Mammary epithelial cell (primary cell): ENCODE measurements at regions of chr2 and their contacts with region 1.

Region 1: GRCh38 chr2:237674731-237675276 is 47.4 kb downstream of the LRRFIP1 start:
- DNase-seq: peak; percentile 87
- H3K4me3 ChIP-seq: peak overlapping the region in 2 of 3 experiments; percentile 13 to 22
- H3K27ac ChIP-seq: peak overlapping the region; percentile 96
- H3K4me1 ChIP-seq: peaks cover 28% of the 10 kb centered on the region
- H3K27me3 ChIP-seq: no peaks in the 10 kb centered on the region
- CTCF ChIP-seq: no peak

Region 2: GRCh38 chr2:237686659-237687136 is 11.9 kb after region 1 on chr2:
- CTCF ChIA-PET with region 1: interaction called, 5 read pairs
- dilution Hi-C with region 1: no loop called
- in situ Hi-C with region 1: no loop called
- intact Hi-C with region 1: loop called (anchors 1 kb)
- DNase-seq: no peak
- H3K4me3 ChIP-seq: no peak overlapping the region
- H3K27ac ChIP-seq: peak overlapping the region; percentile 98
- H3K4me1 ChIP-seq: peaks cover 41% of the 10 kb centered on the region
- H3K27me3 ChIP-seq: no peaks in the 10 kb centered on the region
- CTCF ChIP-seq: no peak

Region 3: GRCh38 chr2:237691908-237692600 is 17.2 kb after region 1 on chr2:
- CTCF ChIA-PET with region 1: interaction called, 5 read pairs
- dilution Hi-C with region 1: no loop called
- in situ Hi-C with region 1: no loop called
- intact Hi-C with region 1: loop called (anchors 1 kb)
- DNase-seq: peak; percentile 84
- H3K4me3 ChIP-seq: peak overlapping the region; percentile 84 to 94 (median 93)
- H3K27ac ChIP-seq: peak overlapping the region; percentile 99
- H3K4me1 ChIP-seq: peaks cover 72% of the 10 kb centered on the region
- H3K27me3 ChIP-seq: no peaks in the 10 kb centered on the region
- CTCF ChIP-seq: no peak

Region 4: DNA sequence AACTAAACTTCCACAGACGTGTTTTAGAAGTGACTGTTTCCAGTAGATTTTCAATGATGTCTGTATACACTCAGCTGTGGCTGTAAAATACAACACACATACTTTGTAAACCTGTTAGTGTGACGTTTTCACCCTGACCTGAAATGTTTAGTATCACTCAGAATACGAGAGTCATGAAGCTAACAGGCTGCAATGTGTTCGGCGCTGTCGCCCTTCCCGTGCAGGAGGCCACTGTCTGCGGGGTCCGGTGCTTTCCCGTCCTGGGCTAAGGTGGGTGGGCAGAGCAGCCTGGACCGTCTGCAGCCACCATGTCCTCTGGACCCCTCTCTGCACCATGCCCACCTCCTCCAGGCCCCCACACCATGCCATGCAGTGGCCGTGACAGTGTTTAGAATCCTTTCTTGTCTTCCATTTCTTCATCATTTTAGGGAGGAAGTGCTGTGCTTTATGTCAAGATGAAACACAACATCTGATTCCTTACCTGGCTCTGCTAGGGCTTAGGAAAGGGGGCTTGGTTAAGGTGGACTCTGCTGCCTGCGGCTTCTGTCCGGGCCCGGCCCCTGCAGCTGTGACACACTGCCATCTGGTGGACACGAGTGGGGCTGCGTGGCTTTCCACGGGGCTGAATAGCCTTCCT is 69.9 kb after region 1 on chr2:
- CTCF ChIA-PET with region 1: interaction called, 5 read pairs
- dilution Hi-C with region 1: loop called (anchors 5 kb)
- in situ Hi-C with region 1: no loop called
- intact Hi-C with region 1: loop called (anchors 1 kb)
- DNase-seq: peak; percentile 32
- H3K4me3 ChIP-seq: no peak overlapping the region
- H3K27ac ChIP-seq: no peak overlapping the region
- H3K4me1 ChIP-seq: no peaks in the 10 kb centered on the region
- H3K27me3 ChIP-seq: no peaks in the 10 kb centered on the region
- CTCF ChIP-seq: peak; percentile 94 to 98

Region 5: DNA sequence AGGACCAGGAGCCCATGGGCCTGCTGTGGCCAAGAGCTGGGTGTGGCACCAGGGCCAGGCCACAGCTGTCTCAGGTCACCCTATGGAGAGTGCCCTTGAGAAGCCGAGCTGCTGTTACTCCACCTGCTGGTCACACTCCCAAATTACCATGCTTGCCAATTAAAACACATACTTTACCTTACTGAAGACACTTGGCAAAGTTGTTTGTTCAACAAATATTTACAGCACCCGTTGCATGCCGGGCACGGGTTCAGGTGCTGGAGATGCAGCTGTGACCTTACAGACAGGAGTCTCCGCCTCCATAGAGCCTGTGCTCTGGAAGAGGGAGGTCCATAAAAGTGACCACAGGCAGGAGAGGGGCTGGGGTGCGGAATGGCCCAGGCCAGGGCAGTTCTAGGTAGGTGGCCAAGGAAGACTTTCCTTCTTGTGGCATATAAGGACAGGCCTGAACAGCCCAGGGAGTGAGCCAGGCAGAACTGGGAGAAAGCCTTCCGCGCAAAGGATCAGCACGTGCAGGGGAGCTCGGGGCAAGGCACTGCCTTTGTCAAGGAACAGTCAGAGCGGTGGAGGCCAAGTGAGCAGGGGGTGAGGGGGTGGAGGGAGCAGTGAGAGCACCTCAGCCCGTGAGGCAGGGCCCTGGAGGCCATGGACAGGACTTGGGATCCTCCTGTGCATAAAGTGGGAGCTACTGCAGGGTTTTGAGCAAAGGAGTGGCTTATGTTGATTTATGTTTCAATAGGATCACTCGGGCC is 100.2 kb after region 1 on chr2:
- CTCF ChIA-PET with region 1: no interaction called
- dilution Hi-C with region 1: no loop called
- in situ Hi-C with region 1: no loop called
- intact Hi-C with region 1: loop called (anchors 1 kb)
- DNase-seq: peak; percentile 33
- H3K4me3 ChIP-seq: no peak overlapping the region
- H3K27ac ChIP-seq: no peak overlapping the region
- H3K4me1 ChIP-seq: no peaks in the 10 kb centered on the region
- H3K27me3 ChIP-seq: no peaks in the 10 kb centered on the region
- CTCF ChIP-seq: peak; percentile 56 to 68

Region 6: DNA sequence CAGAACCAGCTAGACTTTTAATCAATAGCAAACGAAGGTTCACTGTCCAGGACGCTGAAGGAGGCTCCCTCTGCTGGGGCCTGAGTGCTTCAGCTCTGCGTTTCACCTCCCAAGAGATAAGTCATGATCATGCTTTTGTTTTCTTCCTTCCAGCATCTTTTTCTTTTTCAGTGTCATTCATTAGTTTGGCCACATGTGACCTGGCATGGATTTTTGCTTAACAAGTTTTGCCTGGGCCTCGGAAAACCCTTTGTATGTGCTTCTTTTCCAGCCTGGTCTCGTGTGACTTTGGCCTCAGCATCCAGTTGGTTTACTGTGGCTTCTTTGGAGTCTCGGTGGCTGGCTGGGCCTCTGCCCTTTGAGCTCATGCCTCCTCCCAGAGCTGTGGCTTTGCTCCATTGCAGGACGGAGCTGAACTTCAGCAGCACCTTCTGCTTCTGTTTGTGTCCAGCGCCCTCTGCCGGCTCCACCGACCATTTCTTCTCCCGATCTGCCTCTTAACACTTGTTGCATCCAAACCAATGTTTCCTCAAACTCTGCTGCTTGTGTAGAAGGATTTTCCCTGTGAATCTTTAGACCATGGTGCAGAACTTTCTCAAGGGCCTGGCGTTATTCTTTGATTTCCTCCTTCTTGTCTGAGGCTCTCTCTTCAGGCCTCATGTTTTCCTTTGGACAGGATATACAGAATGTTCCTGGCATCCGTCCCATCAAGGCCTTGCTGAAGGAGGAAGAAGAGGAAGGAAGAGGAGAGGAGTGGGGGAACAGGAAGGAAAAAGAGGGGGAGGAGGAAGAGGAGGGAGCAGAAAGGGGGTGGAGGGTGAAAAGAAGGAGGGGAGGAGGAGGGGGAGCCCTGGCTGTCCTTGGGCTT is 588.6 kb after region 1 on chr2:
- CTCF ChIA-PET with region 1: no interaction called
- dilution Hi-C with region 1: no loop called
- in situ Hi-C with region 1: no loop called
- intact Hi-C with region 1: loop called (anchors 10 kb)
- DNase-seq: peak; percentile 67
- H3K4me3 ChIP-seq: no peak overlapping the region
- H3K27ac ChIP-seq: no peak overlapping the region
- H3K4me1 ChIP-seq: peaks cover 22% of the 10 kb centered on the region
- H3K27me3 ChIP-seq: no peaks in the 10 kb centered on the region
- CTCF ChIP-seq: peak; percentile 78 to 79

Region 7: DNA sequence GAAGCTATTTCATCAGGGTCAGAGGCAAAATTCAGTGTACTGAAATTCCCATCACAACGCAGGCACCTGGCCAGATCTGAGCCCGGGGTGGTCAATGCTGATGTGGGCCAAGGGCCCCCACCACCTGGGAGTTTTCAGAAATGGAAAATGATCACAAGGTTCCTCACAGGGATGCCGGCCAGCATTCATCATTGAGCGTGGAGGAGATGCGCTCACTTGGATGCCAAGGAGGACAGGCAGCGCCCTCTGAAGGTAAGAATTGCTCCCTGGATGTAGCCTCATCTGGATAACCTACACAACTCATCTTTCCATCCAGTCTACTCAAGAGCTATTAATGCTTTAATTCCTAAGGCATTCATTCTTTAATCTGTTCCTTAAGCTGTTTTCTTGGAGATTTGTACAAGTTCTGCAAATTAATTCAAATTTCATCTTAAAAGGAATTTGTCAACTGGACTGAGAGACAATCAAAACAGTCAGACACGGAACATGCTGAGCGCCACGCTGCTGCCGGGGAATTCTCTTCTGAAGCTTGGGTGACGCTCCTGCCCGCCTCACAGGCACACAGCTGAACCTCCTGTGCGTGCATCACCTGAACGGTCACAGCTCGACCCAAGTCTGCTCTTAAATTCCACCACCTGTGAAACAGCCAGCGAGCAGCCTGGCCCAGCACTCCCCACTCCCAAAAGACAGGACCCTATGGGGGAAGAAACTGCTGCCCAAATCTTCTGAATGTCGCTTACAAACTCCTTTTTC is 1519.3 kb after region 1 on chr2:
- CTCF ChIA-PET with region 1: no interaction called
- dilution Hi-C with region 1: no loop called
- in situ Hi-C with region 1: no loop called
- intact Hi-C with region 1: no loop called
- DNase-seq: no peak
- H3K4me3 ChIP-seq: no peak overlapping the region
- H3K27ac ChIP-seq: no peak overlapping the region
- H3K4me1 ChIP-seq: no peaks in the 10 kb centered on the region
- H3K27me3 ChIP-seq: no peaks in the 10 kb centered on the region
- CTCF ChIP-seq: peak in 1 of 2 donors; percentile 20